Panc1 (cell line): ENCODE measurements at regions of chr1 and their contacts with region 1.

Region 1: GRCh38 chr1:31593770-31594632 is 17.7 kb downstream of the TINAGL1 start:
- DNase-seq: peak; percentile 47
- ATAC-seq: peak; percentile 94
- H3K4me3 ChIP-seq: no peak overlapping the region
- H3K27ac ChIP-seq: no peak overlapping the region
- H3K4me1 ChIP-seq: peaks cover 21% of the 10 kb centered on the region
- H3K27me3 ChIP-seq: no peaks in the 10 kb centered on the region
- CTCF ChIP-seq: peak; percentile 94

Region 2: DNA sequence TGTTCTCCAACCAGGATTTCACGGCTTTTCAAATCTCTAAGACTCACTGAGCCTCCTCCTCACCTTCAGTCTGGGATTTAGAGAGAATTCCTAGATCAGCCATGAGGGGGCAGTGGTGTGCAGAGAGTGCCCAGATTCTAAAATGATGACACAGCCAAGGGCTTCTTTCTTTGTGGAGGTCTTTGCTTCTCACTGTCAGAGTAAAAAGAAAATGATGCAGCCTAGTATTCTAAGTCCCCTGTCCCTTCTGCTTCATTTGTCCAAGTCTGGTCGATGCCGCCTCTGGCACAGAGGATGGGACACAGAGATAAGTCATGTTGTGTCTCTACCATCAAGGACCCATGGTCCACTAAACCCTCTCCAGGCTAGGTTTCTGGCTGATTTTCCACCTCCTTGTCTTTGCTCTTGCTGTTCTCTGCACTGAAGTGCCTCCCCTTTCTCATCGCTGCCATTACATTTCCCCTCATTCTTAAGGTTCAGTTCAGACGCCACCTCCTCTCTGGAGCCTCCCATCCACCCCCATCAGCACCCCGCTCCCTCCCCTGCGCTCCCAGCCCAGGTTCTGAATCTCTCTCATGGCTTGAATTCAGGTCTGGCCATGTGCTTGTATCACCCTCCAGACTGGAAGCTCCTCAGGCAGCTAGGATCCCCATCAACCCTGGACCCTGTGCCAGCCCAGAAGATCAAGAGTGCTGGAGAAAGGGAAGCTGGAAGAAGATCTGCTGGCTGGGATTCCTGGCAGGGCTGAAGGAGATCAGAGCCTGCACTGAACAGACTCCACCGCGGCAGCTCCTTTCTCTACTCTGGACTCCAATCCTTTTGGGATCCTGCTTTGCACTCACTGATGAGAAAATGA is 29.6 kb before region 1 on chr1:
- CTCF ChIA-PET with region 1: interaction called, 6 read pairs
- POLR2A ChIA-PET with region 1: no interaction called
- in situ Hi-C with region 1: no loop called
- intact Hi-C with region 1: loop called (anchors 2 kb)
- DNase-seq: no peak
- ATAC-seq: peak; percentile 81
- H3K4me3 ChIP-seq: no peak overlapping the region
- H3K27ac ChIP-seq: peak overlapping the region; percentile 11; the same call in 1 of the 2 replicates
- H3K4me1 ChIP-seq: no peaks in the 10 kb centered on the region; the same call in 1 of the 2 replicates
- H3K27me3 ChIP-seq: no peaks in the 10 kb centered on the region
- CTCF ChIP-seq: peak; percentile 90

Region 3: GRCh38 chr1:31577515-31578192 is 16.3 kb before region 1 on chr1:
- CTCF ChIA-PET with region 1: interaction called, 10 read pairs
- POLR2A ChIA-PET with region 1: no interaction called
- in situ Hi-C with region 1: no loop called
- intact Hi-C with region 1: no loop called
- DNase-seq: no peak
- ATAC-seq: no peak
- H3K4me3 ChIP-seq: peak overlapping the region; percentile 32 to 34
- H3K27ac ChIP-seq: peak overlapping the region; percentile 65
- H3K4me1 ChIP-seq: peaks cover 65% of the 10 kb centered on the region
- H3K27me3 ChIP-seq: no peaks in the 10 kb centered on the region
- CTCF ChIP-seq: no peak

Region 4: DNA sequence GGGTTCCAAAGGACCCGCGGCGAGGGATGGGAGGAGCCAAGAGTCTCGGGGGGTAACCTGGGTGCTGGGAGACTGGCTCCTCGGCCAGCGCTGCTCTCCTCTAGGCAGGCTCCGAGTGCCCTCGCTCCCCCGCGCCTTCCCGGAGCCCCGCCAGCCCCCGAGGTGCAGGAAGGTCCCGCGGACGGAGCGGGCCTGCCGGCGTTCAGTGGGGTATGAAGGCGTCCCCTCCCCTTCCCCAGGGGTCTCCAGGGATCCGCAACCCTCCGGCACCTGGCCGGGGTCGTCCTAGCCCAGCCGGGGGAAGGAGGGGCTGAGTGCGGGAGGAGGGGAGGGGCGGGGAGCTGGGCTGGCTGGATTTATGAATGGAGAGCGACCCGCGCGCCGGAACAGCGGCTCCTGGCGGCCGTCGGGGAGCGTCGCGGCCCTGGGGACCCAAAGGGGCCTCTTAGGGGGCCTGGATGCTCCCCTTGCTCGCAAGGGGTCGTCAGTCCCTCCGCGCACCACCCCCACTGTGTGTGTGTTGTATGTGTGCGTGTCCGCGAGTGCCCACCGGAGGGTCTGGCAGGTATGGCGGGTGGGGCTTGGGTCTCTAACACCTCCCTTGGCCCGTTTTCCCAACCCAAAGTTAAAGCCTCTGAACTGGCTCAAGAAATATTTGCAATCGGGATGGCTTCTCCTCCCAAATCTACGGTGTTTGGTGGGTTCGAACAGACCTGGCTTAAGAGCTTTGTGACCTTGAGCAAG is 24.1 kb after region 1 on chr1:
- CTCF ChIA-PET with region 1: no interaction called
- POLR2A ChIA-PET with region 1: no interaction called
- in situ Hi-C with region 1: no loop called
- intact Hi-C with region 1: no loop called
- DNase-seq: no peak
- ATAC-seq: peak; percentile 84
- H3K4me3 ChIP-seq: peak overlapping the region; percentile 45 to 47
- H3K27ac ChIP-seq: no peak overlapping the region
- H3K4me1 ChIP-seq: peaks cover 3% of the 10 kb centered on the region
- H3K27me3 ChIP-seq: peaks cover 5% of the 10 kb centered on the region
- CTCF ChIP-seq: peak; percentile 95